ENCODE measurements at regions of chr2 and their contacts with region 1.

Region 1: DNA sequence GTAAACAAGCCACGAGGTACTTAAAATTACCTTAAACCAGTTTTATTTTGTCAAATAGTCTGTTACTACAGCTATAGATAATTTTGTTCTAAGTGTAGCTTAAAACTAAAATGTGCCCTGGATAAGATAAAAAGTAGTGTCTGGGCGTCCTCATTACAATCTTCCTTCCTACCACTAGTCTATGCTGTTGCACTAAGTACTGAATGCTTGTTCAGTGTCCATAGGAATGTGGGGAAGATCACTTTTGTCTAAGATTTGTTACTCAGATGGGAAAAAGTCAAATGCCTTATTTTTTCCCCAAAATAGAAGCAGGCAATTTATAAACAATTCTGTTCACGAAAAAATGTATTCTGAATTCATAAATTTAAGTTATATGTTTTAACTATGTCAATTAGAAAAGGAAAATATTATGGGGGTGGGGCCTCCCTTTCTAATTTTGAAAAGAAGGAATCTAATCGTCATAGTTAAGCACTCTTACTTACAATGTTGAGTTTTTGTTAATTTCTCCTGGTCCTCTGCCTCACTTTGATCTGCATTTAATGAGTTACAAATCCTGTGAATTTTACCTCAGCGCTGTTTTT is 140.4 kb upstream of the VRK2 start:
- DNase-seq: peak; percentile 69
- ATAC-seq: peak; percentile 99
- H3K4me3 ChIP-seq: no peak overlapping the region
- H3K27ac ChIP-seq: no peak overlapping the region
- H3K4me1 ChIP-seq: no peaks in the 10 kb centered on the region
- H3K27me3 ChIP-seq: no peaks in the 10 kb centered on the region
- CTCF ChIP-seq: peak; percentile 92
- POLR2A ChIP-seq: 0 out of 2 replicates have a peak, but pooled peaks have one; percentile 40
- RAD21 ChIP-seq: peak; percentile 97

Region 2: DNA sequence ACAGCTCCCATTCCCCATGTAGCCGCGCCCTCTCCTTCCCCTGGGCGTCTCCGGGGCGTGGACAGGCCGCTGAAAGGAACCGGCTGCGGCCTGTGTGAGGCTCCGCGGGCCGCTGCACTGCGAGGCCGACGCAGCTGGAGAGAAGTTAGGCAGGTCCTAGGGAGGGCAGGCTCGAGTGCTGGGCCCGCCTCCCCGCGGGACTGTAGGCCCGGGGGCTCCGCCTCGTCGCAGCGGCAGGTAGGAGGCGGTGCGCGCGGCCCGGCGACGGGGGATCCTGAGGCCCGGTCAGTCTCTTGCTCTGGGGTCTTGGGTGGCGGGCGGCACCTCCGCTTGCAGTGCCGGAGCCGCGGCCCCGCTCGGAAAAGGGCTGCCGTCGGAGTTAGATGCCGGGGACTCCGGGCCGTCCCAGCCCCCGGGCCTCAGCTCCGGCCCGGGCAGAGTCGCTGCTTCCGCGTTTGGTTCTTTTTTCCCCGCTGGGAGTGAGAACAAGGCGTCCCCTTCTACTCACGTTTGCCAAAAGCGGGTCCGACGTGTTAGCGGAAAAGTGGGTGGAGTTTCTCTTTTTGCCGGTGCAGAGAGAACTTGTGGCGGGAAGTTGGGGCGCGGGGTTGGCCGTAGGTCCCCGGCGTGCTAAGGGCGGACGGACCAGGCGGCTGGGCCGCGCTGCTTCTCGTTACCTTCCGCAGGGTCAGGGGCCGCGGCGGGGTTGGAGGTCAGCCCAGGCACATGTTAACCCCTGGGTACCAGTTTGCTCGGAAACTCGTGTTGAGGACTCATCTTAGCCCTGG is 140.5 kb after region 1 on chr2 and contains the start of gene VRK2:
- CTCF ChIA-PET with region 1: no interaction called
- POLR2A ChIA-PET with region 1: no interaction called
- dilution Hi-C with region 1: no loop called
- in situ Hi-C with region 1: no loop called
- intact Hi-C with region 1: loop called (anchors 1 kb)
- DNase-seq: peak; percentile 87
- ATAC-seq: peak; percentile 96
- H3K4me3 ChIP-seq: peak within 1 kb of the TSS; percentile 84
- H3K27ac ChIP-seq: peak within 1 kb of the TSS; percentile 86
- H3K4me1 ChIP-seq: peaks cover 2% of the 10 kb centered on the region; the same call in 1 of the 2 replicates
- H3K27me3 ChIP-seq: no peaks in the 10 kb centered on the region
- CTCF ChIP-seq: no peak
- POLR2A ChIP-seq: peak; percentile 56; the same call in 1 of the 2 replicates
- RAD21 ChIP-seq: peak; percentile 15; the same call in 1 of the 2 replicates
- total RNA-seq, gene VRK2: 22.8 and 27.2 TPM in 2 replicates

Region 3: GRCh38 chr2:58131191-58132011 is 225.2 kb after region 1 on chr2:
- CTCF ChIA-PET with region 1: no interaction called
- POLR2A ChIA-PET with region 1: no interaction called
- dilution Hi-C with region 1: no loop called
- in situ Hi-C with region 1: no loop called
- intact Hi-C with region 1: loop called (anchors 1 kb)
- DNase-seq: peak; percentile 63
- ATAC-seq: peak; percentile 52
- H3K4me3 ChIP-seq: no peak overlapping the region
- H3K27ac ChIP-seq: peak overlapping the region; percentile 28; the same call in 1 of the 2 replicates
- H3K4me1 ChIP-seq: peaks cover 6% of the 10 kb centered on the region
- H3K27me3 ChIP-seq: no peaks in the 10 kb centered on the region
- CTCF ChIP-seq: peak; percentile 37
- POLR2A ChIP-seq: no peak
- RAD21 ChIP-seq: peak; percentile 32; the same call in 1 of the 2 replicates

Region 4: DNA sequence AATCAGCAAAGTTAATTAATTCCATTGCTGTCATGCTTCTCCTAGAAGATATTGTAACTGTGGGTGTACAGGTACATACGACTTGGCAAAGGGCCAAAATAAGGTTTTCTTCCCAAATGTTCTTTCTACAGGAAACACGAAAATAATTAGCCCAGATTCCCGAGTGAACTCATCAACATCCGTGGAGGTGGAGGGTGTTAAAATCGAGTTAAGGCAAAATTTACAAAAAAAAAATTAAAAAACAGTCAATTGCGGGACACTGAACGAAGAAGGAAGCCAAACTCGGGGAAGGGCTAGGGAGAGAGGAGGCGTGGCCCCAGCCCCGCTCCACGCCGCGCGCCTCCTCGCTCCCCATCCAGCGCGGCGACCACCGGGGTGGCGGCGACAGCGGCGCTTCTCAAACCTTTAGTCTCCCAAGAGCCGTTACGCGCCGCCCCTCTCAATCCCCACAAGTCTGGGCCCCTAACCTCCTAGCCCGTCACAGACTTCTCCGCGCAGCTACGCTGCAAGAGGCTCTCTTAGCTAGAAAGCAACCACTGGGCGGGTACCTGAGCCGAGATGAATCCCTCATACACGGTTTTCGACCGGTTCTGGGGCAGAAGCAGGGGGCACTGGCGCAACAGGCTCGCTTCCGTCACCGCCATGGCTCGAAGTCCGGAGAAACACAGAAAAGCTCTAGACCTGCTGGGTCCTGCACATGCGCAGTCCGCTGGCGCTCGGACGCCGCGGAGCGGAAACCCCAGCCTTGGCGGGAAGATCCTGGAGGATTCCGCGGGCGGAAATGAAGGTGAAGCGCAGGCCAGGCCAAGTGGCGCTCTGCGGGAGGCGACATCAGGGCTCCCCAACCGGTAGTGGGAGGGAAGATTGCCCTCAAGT is 334.7 kb after region 1 on chr2 and contains the start of gene FANCL:
- CTCF ChIA-PET with region 1: interaction called, 3 read pairs
- POLR2A ChIA-PET with region 1: no interaction called
- dilution Hi-C with region 1: no loop called
- in situ Hi-C with region 1: no loop called
- intact Hi-C with region 1: loop called (anchors 2 kb)
- DNase-seq: peak; percentile 80
- ATAC-seq: peak; percentile 96
- H3K4me3 ChIP-seq: peak within 1 kb of the TSS; percentile 95
- H3K27ac ChIP-seq: peak within 1 kb of the TSS; percentile 86
- H3K4me1 ChIP-seq: no peaks in the 10 kb centered on the region
- H3K27me3 ChIP-seq: no peaks in the 10 kb centered on the region
- CTCF ChIP-seq: no peak
- POLR2A ChIP-seq: peak; percentile 65; the same call in 1 of the 2 replicates
- RAD21 ChIP-seq: 0 out of 2 replicates have a peak, but pooled peaks have one; percentile 1
- total RNA-seq, gene FANCL: 9.0 and 16.7 TPM in 2 replicates

Region 5: DNA sequence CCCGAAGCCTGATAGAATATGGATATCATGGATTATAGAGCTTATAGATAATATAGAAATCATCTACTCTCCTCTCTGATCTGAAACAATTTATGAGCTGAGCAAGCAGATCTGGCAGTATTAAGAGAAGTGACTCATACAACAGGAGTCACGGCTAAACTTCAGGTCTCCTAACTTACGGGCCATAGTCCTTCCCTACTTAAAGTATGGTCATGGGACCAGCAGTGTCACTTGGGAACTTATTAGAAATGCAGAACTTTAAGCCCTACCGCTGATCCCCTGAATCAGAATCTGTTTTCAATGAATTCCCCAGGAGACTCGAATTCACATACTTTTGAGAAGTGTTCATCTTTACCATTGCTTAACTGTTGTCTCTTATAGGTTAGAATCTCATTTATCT is 530.6 kb after region 1 on chr2:
- CTCF ChIA-PET with region 1: interaction called, 3 read pairs
- POLR2A ChIA-PET with region 1: no interaction called
- dilution Hi-C with region 1: no loop called
- in situ Hi-C with region 1: loop called (anchors 10 kb)
- intact Hi-C with region 1: no loop called
- DNase-seq: no peak
- ATAC-seq: no peak
- H3K4me3 ChIP-seq: no peak overlapping the region
- H3K27ac ChIP-seq: no peak overlapping the region
- H3K4me1 ChIP-seq: no peaks in the 10 kb centered on the region
- H3K27me3 ChIP-seq: no peaks in the 10 kb centered on the region
- CTCF ChIP-seq: no peak
- POLR2A ChIP-seq: no peak
- RAD21 ChIP-seq: no peak

Region 6: GRCh38 chr2:58571181-58571852 is 665.1 kb after region 1 on chr2:
- CTCF ChIA-PET with region 1: no interaction called
- POLR2A ChIA-PET with region 1: no interaction called
- dilution Hi-C with region 1: no loop called
- in situ Hi-C with region 1: no loop called
- intact Hi-C with region 1: loop called (anchors 10 kb)
- DNase-seq: peak; percentile 69
- ATAC-seq: peak; percentile 96
- H3K4me3 ChIP-seq: no peak overlapping the region
- H3K27ac ChIP-seq: no peak overlapping the region
- H3K4me1 ChIP-seq: no peaks in the 10 kb centered on the region
- H3K27me3 ChIP-seq: no peaks in the 10 kb centered on the region
- CTCF ChIP-seq: peak; percentile 64
- POLR2A ChIP-seq: no peak
- RAD21 ChIP-seq: peak; percentile 68

Measured in IMR-90 (cell line).